AG04449 (cell line): ENCODE measurements at regions of chr11 and their contacts with region 1.

Region 1: GRCh38 chr11:75445315-75445953 is 12.4 kb upstream of the KLHL35 start:
- DNase-seq: no peak
- H3K4me3 ChIP-seq: no peak overlapping the region
- CTCF ChIP-seq: peak; percentile 90

Region 2: GRCh38 chr11:75365711-75366181 is 79.7 kb before region 1 on chr11:
- CTCF ChIA-PET with region 1: no interaction called
- POLR2A ChIA-PET with region 1: no interaction called
- DNase-seq: no peak
- H3K4me3 ChIP-seq: no peak overlapping the region
- CTCF ChIP-seq: no peak

Region 3: GRCh38 chr11:75428281-75428724 is 17.1 kb before region 1 on chr11:
- CTCF ChIA-PET with region 1: interaction called, 50 read pairs
- POLR2A ChIA-PET with region 1: no interaction called
- DNase-seq: peak; percentile 21
- H3K4me3 ChIP-seq: peak overlapping the region; percentile 48
- CTCF ChIP-seq: no peak

Region 4: DNA sequence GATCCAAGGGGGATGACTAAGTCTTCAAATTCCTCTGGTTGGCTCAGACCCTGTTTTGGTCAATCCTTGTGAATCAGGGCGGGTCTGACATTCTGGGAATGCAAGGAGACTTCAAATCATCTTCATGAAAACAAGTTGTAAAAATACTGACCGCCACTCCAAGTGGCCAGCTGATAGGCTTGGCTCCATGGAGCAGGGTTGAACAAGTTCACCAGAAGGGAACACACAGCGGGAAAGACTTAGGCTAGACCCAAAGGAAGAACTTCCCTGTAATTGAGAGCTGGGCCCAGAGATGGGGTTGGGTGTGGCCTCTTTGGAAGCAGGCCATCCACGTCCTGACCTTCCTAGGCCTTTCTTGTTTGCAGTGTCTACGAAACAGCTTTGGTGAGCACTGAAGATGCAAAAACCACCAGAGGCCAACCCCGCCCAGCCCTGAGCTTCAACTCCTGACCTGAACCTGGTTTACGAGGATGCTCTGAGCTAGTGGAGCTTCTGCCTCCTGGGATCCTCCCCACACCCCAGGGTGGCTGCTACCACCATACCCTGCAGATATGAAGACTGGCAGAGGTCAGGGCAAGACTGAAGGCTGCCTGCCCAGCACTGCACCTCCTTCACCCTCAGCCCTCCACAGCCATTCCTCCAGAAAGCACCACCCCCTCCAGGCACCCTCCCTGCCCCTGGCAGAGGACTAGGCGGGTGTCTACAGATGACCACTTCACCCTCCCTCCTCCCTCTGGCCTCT is 54.2 kb after region 1 on chr11:
- CTCF ChIA-PET with region 1: interaction called, 11 read pairs
- POLR2A ChIA-PET with region 1: no interaction called
- DNase-seq: peak; percentile 91
- H3K4me3 ChIP-seq: no peak overlapping the region
- CTCF ChIP-seq: no peak

Region 5: GRCh38 chr11:75539459-75540334 is 94.3 kb after region 1 on chr11:
- CTCF ChIA-PET with region 1: interaction called, 658 read pairs
- POLR2A ChIA-PET with region 1: no interaction called
- DNase-seq: no peak
- H3K4me3 ChIP-seq: no peak overlapping the region
- CTCF ChIP-seq: no peak

Region 6: GRCh38 chr11:75577207-75577606 is 131.8 kb after region 1 on chr11:
- CTCF ChIA-PET with region 1: interaction called, 13 read pairs
- POLR2A ChIA-PET with region 1: no interaction called
- DNase-seq: no peak
- H3K4me3 ChIP-seq: no peak overlapping the region
- CTCF ChIP-seq: peak; percentile 68